T-cell (primary cell): ENCODE measurements at regions of chr3 and their contacts with region 1.

Region 1: GRCh38 chr3:3068358-3068881 is 41.8 kb downstream of the IL5RA start:
- DNase-seq: no peak
- ATAC-seq: no peak
- H3K4me3 ChIP-seq: no peak overlapping the region
- H3K4me3 Mint-ChIP-seq: no peak overlapping the region
- H3K27ac ChIP-seq: no peak overlapping the region
- H3K27ac Mint-ChIP-seq: no peak overlapping the region
- H3K4me1 ChIP-seq: no peaks in the 10 kb centered on the region
- H3K4me1 Mint-ChIP-seq: no peaks in the 10 kb centered on the region
- H3K27me3 ChIP-seq: peaks cover 0 to 4% of the 10 kb centered on the region in 2 experiments
- H3K27me3 Mint-ChIP-seq: no peaks in the 10 kb centered on the region

Region 2: DNA sequence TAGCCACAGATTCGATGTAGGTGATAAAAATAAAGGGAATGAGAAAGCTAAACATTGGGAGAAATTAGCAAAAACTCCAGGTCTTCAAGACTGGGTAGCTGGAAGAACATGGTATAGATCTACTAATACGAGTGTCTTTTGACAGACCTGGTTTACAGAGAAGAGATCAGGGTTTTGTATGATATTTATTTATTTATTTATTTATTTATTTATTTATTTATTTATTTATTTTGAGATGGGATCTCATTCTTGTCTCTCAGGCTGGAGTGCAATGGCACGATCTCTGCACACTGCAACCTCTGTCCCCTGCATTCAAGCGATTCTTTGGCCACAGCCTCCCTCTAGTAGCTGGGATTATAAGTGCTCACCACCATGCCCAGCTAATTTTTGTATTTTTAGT is 521.4 kb before region 1 on chr3:
- CTCF ChIA-PET with region 1: interaction called in 1 of 2 experiments, 13 read pairs
- POLR2A ChIA-PET with region 1: no interaction called
- DNase-seq: no peak
- ATAC-seq: no peak
- H3K4me3 ChIP-seq: no peak overlapping the region
- H3K4me3 Mint-ChIP-seq: no peak overlapping the region
- H3K27ac ChIP-seq: no peak overlapping the region
- H3K27ac Mint-ChIP-seq: no peak overlapping the region
- H3K4me1 ChIP-seq: no peaks in the 10 kb centered on the region
- H3K4me1 Mint-ChIP-seq: no peaks in the 10 kb centered on the region
- H3K27me3 ChIP-seq: no peaks in the 10 kb centered on the region
- H3K27me3 Mint-ChIP-seq: peaks cover 1 to 3% of the 10 kb centered on the region in 2 donors